Kidney (tissue), 22 donors: ENCODE measurements at regions of chr1 and their contacts with region 1.

Region 1: DNA sequence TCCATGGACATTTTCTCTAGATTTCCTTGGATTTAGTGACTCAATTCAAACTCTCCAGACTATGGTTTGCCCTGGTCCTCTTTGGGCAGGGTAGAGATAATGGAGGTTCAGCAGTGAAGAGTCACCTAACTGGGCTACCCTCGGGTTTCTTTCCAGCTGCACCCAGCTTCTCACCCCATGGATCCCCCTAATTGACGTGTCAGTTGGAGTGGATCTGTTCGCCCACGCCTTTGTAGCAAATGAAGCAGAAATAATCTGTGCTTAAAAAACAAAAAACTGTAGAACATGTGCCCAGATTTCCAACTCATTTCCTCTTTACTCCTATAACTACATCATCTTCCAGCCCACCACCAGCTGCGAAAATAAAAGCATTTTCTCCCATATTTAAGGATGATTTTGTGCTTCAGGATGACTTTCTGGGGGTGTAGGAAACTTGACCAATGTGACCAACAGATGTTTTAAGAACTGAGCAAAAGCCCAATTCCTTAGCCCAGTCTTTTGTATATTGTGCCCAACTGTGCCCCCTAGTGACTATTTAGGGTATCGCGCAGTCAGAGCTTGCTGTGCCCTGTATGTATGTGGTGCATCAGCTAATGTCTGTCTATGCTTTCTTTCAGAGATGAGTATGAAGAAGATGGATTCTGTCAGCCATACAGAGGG is 66.5 kb upstream of the UBE2U start:
- DNase-seq: peak; percentile 60 to 93 (median 87)
- H3K4me3 ChIP-seq: no peak overlapping the region
- H3K27ac ChIP-seq: no peak overlapping the region
- H3K4me1 ChIP-seq: peaks cover 0 to 3% (median 0%) of the 10 kb centered on the region in 3 donors
- H3K27me3 ChIP-seq: no peaks in the 10 kb centered on the region
- CTCF ChIP-seq: peak; percentile 86

Region 2: GRCh38 chr1:63773815-63774616 is 362.9 kb before region 1 on chr1 and contains the start of gene ROR1:
- intact Hi-C with region 1: loop called (anchors 10 kb)
- DNase-seq: peak; percentile 94 to 97 (median 94)
- H3K4me3 ChIP-seq: peak within 1 kb of the TSS; percentile 63 to 71 (median 68)
- H3K27ac ChIP-seq: peak within 1 kb of the TSS; percentile 57 to 78
- H3K4me1 ChIP-seq: peaks cover 0 to 4% (median 0%) of the 10 kb centered on the region in 3 donors
- H3K27me3 ChIP-seq: no peaks in the 10 kb centered on the region
- CTCF ChIP-seq: peak; percentile 57
- total RNA-seq, gene ROR1: 8.0 TPM

Region 3: DNA sequence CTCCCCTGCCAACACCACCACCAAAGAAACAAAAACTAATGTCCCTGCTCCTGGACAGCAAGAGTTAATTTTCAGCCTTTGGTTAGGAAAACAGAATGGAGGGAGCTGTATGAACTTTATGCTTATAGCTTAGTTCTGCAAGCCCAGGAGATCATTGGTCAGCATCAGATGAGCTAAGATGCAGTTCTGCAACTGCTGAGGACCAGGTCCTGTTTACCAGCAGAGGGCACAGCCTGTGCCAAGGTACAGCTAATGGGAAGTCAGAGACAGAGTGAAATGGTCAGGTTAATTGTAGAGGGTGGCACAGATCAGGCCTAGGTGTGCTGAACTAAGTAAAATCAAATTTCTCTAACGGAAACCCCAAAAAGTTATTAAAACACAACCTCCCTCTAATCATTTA is 201.7 kb before region 1 on chr1:
- intact Hi-C with region 1: no loop called
- DNase-seq: peak in 2 of 5 donors; percentile 53 to 78
- H3K4me3 ChIP-seq: no peak overlapping the region
- H3K27ac ChIP-seq: no peak overlapping the region
- H3K4me1 ChIP-seq: no peaks in the 10 kb centered on the region
- H3K27me3 ChIP-seq: no peaks in the 10 kb centered on the region
- CTCF ChIP-seq: peak; percentile 31

Region 4: DNA sequence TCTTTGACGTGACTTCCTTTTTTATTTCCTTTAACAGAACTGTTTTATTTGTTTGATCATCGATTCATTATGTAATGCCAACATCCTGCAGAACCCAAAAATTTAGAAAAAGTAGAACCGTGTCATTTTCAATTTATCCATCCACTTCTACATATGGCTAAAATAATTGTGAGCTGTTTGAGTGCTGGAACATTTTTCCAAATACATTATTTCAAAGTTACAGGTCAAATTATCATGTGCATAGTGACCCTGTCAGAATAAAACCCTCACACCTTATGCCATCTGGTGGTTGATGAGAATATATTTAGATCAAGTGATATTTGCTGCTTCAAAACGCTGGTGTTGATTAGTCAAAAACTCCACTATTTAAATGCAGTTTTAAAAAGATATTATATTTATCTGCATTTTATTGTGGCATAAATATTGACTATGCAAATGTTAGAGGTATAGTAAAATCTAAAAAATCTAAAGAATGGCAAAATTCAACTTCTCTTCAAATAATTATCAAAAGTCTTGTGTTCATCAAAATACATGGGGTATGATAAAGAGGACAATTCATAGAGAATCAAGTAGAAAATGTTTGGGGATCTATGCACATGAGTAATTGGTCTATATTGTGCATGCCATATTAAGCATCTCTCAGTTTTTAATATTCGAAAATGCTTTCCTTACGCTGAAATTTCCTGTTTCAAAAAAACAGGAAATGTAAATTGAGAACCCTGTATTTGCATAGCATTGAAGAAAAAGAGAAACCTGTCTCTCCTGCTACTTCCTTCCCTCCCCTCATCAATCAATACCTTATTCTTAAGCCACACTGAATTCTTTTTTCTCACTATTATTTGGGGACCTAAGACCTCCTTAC is 106.2 kb after region 1 on chr1:
- intact Hi-C with region 1: no loop called
- DNase-seq: peak in 2 of 5 donors; percentile 48 to 67
- H3K4me3 ChIP-seq: no peak overlapping the region
- H3K27ac ChIP-seq: no peak overlapping the region
- H3K4me1 ChIP-seq: peaks cover 0 to 3% (median 0%) of the 10 kb centered on the region in 3 donors
- H3K27me3 ChIP-seq: no peaks in the 10 kb centered on the region
- CTCF ChIP-seq: peak; percentile 51